ENCODE measurements at regions of chr2 and their contacts with region 1.

Region 1: GRCh38 chr2:62186156-62186905 is 9.6 kb upstream of the B3GNT2 start:
- DNase-seq: no peak
- ATAC-seq: peak; percentile 7 to 57 (median 48)
- H3K4me3 ChIP-seq: peak overlapping the region in 1 of 12 donors; percentile 25
- H3K27ac ChIP-seq: peak overlapping the region in 10 of 12 donors; percentile 2 to 71 (median 50)
- H3K4me1 ChIP-seq: peaks cover 0 to 47% (median 22%) of the 10 kb centered on the region in 12 donors
- H3K27me3 ChIP-seq: no peaks in the 10 kb centered on the region
- CTCF ChIP-seq: no peak
- POLR2A ChIP-seq: no peak

Region 2: GRCh38 chr2:62038975-62039771 is 147.2 kb before region 1 on chr2:
- intact Hi-C with region 1: no loop called
- DNase-seq: no peak
- ATAC-seq: peak in 2 of 4 donors; percentile 33 to 51
- H3K4me3 ChIP-seq: no peak overlapping the region
- H3K27ac ChIP-seq: no peak overlapping the region
- H3K4me1 ChIP-seq: peaks cover 0 to 21% (median 0%) of the 10 kb centered on the region in 12 donors
- H3K27me3 ChIP-seq: no peaks in the 10 kb centered on the region
- CTCF ChIP-seq: no peak
- POLR2A ChIP-seq: no peak

Region 3: DNA sequence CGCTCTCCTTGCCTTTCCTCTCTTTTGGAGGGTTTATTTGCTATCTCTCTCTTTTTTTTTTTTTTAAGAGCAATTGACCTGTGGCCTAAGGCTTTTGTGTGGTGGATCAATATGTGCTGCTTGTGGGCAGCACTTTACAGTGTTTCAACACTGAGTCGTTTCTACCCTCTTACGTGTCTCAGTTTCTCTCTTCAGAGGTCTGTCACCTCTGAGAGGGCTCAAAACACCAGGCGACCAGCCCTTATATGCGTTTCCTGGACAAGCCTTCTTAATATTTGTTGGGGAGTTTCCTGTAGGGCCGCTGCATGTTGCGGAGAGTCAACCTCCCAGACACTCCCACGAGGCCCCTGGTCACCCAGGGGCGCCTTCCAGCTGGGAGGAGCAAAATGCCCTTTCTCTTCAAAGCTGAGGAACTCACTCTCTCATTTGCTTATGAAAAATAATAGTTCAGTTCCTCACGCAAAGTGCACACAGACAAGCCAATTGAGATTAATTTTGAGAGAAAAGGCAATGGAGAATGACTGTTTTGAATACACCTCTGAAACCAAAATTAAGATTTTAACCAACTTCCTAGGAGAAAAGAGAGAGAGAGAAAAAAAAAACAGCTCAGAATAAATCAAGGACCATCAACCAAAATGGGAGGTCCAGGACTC is 86.7 kb before region 1 on chr2:
- intact Hi-C with region 1: no loop called
- DNase-seq: no peak
- ATAC-seq: no peak
- H3K4me3 ChIP-seq: no peak overlapping the region
- H3K27ac ChIP-seq: no peak overlapping the region
- H3K4me1 ChIP-seq: peaks cover 0 to 13% (median 0%) of the 10 kb centered on the region in 12 donors
- H3K27me3 ChIP-seq: no peaks in the 10 kb centered on the region
- CTCF ChIP-seq: no peak
- POLR2A ChIP-seq: no peak

Region 4: GRCh38 chr2:62149708-62150107 is 36.6 kb before region 1 on chr2:
- intact Hi-C with region 1: loop called in 1 of 10 experiments (anchors 5 kb)
- DNase-seq: no peak
- ATAC-seq: peak in 3 of 4 donors; percentile 36 to 81 (median 70)
- H3K4me3 ChIP-seq: no peak overlapping the region
- H3K27ac ChIP-seq: peak overlapping the region in 8 of 12 donors; percentile 52 to 92 (median 78)
- H3K4me1 ChIP-seq: peaks cover 0 to 41% (median 14%) of the 10 kb centered on the region in 12 donors
- H3K27me3 ChIP-seq: no peaks in the 10 kb centered on the region
- CTCF ChIP-seq: no peak
- POLR2A ChIP-seq: no peak